Posterior cingulate gyrus (tissue), 11 donors: ENCODE measurements at regions of chr1 and their contacts with region 1.

Region 1: GRCh38 chr1:10152709-10153284 is 57.6 kb upstream of the KIF1B start:
- DNase-seq: peak; percentile 33 to 96 (median 80)

Region 2: GRCh38 chr1:9957726-9958125 is 195.1 kb before region 1 on chr1:
- intact Hi-C with region 1: loop called (anchors 5 kb)
- DNase-seq: no peak